MCF 10A (cell line): ENCODE measurements at regions of chr18 and their contacts with region 1.

Region 1: DNA sequence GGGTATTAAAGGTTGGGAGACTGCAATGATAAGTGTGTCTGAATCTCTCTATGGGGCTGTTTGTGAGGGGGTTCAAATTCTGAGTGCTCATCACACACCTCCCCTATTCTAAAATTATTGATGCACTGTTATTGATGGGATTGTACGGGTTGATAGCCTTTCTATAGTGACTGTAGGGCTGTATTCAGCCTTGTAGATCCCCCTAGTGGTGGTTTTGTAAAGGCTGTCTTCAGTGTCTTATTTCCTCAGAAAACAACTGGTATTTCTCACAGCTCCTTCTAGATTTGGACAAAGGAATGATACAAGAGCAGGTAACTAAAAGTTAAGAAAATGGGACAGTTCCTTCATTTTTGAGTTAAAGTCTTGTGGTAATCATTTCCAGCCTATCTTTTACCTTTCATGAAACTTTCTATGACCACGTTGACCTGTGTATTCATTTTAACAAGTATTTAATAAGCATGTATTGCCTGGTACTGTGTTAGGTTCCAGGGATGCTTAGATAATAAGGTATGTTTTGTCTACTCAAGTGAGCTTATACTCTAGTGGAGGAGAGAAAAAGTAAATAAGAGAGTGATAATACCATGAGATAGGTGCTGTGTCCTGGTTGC is 21.2 kb downstream of the SMAD4 start:
- DNase-seq: peak; percentile 57
- H3K4me3 Mint-ChIP-seq: no peak overlapping the region
- H3K27ac Mint-ChIP-seq: no peak overlapping the region
- H3K4me1 Mint-ChIP-seq: peaks cover 4% of the 10 kb centered on the region
- H3K27me3 Mint-ChIP-seq: no peaks in the 10 kb centered on the region
- CTCF ChIP-seq: peak; percentile 72

Region 2: DNA sequence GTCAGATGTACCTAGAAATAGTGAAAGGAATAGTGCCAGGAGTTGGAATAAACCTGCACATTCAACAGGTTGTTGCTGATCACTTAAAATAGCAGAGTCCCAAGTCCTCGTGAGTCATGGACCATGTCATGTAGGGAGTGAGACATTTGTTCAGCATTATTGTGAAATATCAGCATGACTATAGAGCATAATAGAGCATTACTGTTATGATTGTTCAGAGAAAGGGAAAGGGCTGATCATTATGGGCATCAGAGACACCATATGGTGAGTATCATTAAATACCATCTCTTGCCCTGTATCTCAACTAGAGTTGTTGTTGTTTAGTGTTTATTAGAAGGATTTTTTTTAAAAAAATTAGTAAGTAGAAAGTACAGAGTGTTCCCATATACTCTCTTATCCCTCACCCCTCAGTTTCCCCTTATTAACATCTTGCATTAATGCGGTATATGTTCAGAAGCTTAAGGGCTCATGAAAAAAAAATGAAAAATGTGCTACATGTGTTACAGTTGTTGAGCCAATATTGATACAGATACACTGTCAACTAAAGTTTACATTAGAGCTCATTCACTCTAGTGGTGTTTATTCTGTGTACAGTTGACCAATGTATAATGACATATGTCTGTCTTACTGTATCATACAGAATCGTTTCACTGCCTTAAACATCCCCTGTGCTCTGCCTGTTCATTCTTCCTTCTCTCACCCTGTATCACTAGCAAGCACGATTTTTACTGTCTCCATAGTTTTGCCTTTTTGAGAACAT is 77.7 kb before region 1 on chr18:
- CTCF ChIA-PET with region 1: interaction called, 3 read pairs
- POLR2A ChIA-PET with region 1: interaction called, 5 read pairs
- intact Hi-C with region 1: loop called (anchors 5 kb)
- DNase-seq: peak; percentile 84
- H3K4me3 Mint-ChIP-seq: no peak overlapping the region
- H3K27ac Mint-ChIP-seq: peak overlapping the region; percentile 46
- H3K4me1 Mint-ChIP-seq: peaks cover 39% of the 10 kb centered on the region
- H3K27me3 Mint-ChIP-seq: no peaks in the 10 kb centered on the region
- CTCF ChIP-seq: no peak

Region 3: GRCh38 chr18:51039138-51040112 is 11.8 kb before region 1 on chr18:
- CTCF ChIA-PET with region 1: interaction called, 26 read pairs
- POLR2A ChIA-PET with region 1: no interaction called
- intact Hi-C with region 1: no loop called
- DNase-seq: no peak
- H3K4me3 Mint-ChIP-seq: no peak overlapping the region
- H3K27ac Mint-ChIP-seq: peak overlapping the region; percentile 19
- H3K4me1 Mint-ChIP-seq: peaks cover 43% of the 10 kb centered on the region
- H3K27me3 Mint-ChIP-seq: no peaks in the 10 kb centered on the region
- CTCF ChIP-seq: no peak

Region 4: GRCh38 chr18:51066273-51066672 is 15.1 kb after region 1 on chr18:
- CTCF ChIA-PET with region 1: interaction called, 22 read pairs
- POLR2A ChIA-PET with region 1: interaction called, 5 read pairs
- intact Hi-C with region 1: no loop called
- DNase-seq: no peak
- H3K4me3 Mint-ChIP-seq: no peak overlapping the region
- H3K27ac Mint-ChIP-seq: no peak overlapping the region
- H3K4me1 Mint-ChIP-seq: peaks cover 19% of the 10 kb centered on the region
- H3K27me3 Mint-ChIP-seq: no peaks in the 10 kb centered on the region
- CTCF ChIP-seq: no peak

Region 5: DNA sequence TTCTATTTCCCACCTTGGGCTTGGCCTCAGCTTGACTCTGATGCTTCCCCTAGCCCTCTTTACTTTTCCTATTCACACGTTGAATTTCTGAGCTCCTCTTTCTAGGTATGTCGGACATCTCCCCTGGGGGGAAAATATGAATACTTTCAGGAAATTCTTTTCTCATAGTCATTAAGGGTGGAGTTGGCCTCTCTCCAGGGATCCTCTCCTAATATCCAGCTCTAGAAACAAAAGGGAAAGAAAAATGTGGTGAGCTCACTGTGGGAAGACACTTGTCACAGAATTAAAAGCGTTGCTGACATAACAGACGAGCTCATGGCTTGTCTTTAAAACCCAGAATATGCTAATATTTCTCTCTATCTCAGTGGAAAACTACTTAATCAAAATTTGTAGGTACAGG is 278.9 kb after region 1 on chr18:
- CTCF ChIA-PET with region 1: no interaction called
- POLR2A ChIA-PET with region 1: no interaction called
- intact Hi-C with region 1: no loop called
- DNase-seq: peak; percentile 81
- H3K4me3 Mint-ChIP-seq: peak overlapping the region; percentile 13
- H3K27ac Mint-ChIP-seq: peak overlapping the region; percentile 18
- H3K4me1 Mint-ChIP-seq: peaks cover 13% of the 10 kb centered on the region
- H3K27me3 Mint-ChIP-seq: no peaks in the 10 kb centered on the region
- CTCF ChIP-seq: no peak